ENCODE measurements at regions of chr11 and their contacts with region 1.

Region 1: DNA sequence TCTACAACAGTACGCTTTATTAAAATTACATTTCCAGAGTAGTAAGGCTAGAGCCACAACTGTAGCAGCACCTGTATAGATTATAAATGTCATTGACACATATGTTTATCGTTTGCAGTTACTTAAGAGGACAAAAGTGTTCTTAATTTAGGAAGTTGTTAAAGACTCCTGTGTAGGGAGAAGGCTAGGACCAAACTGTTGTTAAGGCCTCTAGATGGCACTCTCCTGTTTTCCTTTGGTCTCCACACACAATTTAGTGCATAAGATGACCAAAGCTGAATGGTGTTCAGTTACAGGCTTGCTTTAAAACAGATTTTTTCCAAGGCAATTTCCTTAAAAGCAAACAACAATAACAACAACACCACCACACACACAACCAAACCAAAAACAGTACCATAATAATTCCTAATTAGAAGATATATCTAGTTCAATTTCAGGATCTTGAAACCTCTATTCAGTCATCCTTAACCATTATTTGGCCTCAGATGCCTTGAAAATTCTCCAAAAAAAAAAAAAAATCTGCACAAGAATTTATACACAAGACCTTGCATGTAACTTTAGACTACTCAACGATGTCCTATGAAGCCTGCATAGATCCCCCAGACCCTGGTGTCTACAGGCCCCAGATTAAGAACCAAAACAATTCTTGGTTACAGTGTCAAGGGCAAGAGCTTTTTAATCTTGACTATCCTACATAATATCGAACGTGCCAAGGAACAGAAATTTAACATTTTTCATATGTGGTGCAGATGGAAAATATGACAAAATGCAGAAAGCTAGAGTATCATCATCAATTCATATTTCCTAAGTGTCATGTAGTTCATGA is 42.6 kb upstream of the APOA1 start:
- DNase-seq: no peak
- ATAC-seq: peak; percentile 86
- H3K4me3 Mint-ChIP-seq: no peak overlapping the region
- H3K27ac Mint-ChIP-seq: no peak overlapping the region
- H3K4me1 Mint-ChIP-seq: peaks cover 9% of the 10 kb centered on the region
- H3K27me3 Mint-ChIP-seq: no peaks in the 10 kb centered on the region

Region 2: DNA sequence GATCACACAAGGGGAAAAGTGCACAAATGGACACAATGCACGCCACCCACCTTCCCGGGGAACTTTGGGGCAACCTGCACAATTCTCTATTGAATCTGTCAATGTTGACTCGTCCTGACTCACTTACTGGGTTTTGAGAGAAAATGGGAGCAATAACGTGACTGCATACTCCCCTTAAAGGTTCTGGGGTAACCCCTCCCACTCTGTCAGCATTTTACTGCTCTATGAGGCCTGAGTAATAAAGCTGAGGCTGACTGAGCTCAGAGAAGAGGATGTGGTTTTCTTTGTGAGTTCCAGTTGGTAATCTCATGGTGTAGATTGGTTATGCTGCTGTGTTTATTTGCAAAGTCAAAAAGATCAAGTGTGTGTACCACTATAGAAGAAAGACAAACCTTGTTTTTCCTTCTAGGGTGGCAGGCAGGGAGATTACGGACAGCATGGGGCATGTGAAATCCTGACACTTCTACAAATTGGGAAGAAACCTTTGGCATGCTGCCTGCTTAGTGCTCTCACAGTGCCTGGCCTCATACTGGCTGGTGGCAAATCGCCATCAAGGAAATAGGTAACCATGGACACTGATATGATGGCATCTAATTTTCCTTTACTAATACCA is 26.4 kb before region 1 on chr11:
- CTCF ChIA-PET with region 1: interaction called, 13 read pairs
- DNase-seq: peak; percentile 87
- ATAC-seq: peak; percentile 94
- H3K4me3 Mint-ChIP-seq: peak overlapping the region; percentile 67
- H3K27ac Mint-ChIP-seq: peak overlapping the region; percentile 94
- H3K4me1 Mint-ChIP-seq: peaks cover 62% of the 10 kb centered on the region
- H3K27me3 Mint-ChIP-seq: no peaks in the 10 kb centered on the region